GM10248 (cell line): ENCODE measurements at regions of chr1 and their contacts with region 1.

Region 1: GRCh38 chr1:38586993-38587646 is 272.5 kb downstream of the RRAGC start:
- DNase-seq: peak; percentile 83
- CTCF ChIP-seq: peak; percentile 95

Region 2: DNA sequence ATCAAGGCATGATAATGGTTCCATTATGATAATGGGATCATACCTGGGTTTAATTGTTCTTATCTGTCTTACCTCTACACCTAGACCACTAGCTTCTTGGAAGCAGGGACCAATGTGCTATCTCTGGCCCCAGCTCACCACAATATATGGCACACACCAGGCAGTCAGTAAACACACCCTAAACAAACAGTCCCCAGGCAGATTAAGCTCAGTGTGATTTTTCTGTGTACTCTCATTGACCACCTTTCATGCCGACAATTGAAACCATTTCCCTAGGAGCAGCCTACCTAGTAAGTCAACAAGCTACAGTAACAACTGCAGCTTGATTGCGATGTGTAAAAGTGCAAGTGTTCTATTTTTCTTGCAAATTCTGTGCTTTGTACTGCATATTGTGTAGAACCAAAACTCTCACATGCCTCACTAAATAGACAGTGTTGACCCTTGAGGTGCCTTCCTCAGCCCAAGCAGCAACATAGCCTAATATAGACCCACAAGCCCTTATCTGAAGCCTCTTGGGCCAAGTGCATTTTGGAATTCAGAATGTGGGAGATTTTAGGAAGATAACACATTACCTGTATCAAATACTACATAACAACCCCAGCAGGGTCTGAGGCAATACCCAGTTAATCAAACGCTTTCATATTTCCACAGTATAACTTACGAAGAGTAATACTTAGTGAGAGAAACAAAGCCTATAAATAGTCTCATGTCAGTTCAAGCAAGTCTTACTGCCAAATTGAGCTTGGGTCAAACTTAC is 672.2 kb before region 1 on chr1:
- CTCF ChIA-PET with region 1: no interaction called
- POLR2A ChIA-PET with region 1: no interaction called
- DNase-seq: no peak
- CTCF ChIP-seq: no peak

Region 3: DNA sequence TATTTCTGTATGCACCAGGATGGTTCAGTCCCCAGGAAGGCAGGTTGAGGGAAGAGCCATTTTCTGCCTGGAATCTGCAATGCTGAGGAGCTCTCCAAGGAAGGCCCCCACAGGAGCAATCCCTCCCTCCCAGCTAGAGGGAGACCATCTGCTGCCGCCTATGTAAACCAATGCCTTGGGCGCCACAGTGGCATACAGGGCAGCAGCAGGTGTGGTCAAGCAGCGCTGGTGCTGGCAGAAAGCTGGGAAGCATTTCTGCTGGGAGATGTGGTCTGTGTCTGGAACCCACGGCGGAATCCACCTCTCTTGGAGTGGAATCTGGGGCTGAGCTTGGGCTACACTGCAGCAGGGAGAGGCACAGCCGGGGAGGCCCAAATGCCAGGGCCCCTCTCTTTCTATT is 10.9 kb before region 1 on chr1:
- CTCF ChIA-PET with region 1: interaction called, 26 read pairs
- POLR2A ChIA-PET with region 1: no interaction called
- DNase-seq: no peak
- CTCF ChIP-seq: no peak

Region 4: GRCh38 chr1:38690790-38691449 is 103.8 kb after region 1 on chr1:
- CTCF ChIA-PET with region 1: no interaction called
- POLR2A ChIA-PET with region 1: no interaction called
- DNase-seq: no peak
- CTCF ChIP-seq: no peak